HEK293T (cell line): ENCODE measurements at regions of chr18 and their contacts with region 1.

Region 1: DNA sequence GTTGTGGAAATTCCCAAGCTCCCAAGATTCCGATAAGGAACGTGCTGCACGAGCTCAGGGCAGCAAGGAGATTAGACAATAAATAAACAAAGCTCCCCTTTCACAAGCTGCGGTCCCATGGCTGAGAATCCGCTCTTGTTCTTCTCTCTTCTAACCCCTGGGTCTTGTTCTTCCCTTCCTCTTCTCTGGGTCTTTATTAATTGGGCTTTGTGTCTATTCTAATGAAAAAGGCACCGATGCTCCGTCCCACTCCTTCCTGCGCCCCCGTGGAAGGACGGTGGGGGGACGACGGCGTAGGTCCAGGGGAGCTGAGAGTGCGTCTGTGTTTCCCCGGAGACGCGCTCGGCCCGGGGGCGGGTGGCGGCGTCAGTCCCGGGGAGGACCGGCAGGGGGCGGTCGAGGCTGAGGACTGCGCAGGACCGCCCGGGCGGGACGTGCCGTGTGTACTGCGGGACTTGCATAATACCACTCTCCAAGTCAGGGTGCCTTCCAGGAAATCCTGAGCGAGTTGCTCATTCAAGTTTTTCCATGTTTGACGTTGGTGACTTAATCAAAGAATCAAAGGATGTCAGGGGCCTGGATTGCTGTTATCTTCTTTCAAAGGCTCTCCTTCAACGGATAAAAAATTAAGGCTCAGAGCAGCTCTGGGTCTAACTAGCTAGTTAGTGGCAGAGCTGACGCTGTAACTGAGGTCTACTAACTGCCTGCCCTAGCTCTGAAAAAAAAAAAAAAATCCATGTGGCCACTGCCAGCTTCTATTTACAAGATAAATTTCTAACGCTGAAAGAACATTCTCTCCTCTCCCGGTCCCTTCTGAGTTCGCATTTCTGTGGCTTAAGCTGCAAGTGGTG is 321.4 kb downstream of the TGIF1 start:
- DNase-seq: peak; percentile 76

Region 2: DNA sequence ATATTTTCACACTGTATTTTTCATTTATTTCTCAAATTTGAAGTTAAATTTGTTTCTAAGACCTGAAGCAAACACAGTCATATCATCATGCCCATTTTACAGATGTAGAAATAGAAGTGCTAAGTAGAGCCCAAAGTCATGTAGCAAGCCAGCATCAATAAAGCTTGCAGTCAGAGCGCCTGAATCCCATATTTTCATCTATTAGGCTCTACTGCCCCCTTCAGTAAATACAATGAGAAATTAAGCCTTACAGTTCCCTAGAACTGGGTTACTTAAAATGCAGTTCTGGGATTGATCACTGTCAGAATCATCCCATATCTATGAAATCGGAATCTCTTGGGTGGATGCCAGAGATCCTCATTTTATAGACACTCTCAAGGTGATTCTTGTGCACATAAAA is 98.5 kb after region 1 on chr18:
- CTCF ChIA-PET with region 1: interaction called, 26 read pairs
- POLR2A ChIA-PET with region 1: interaction called, 3 read pairs
- DNase-seq: peak; percentile 15

Region 3: GRCh38 chr18:3995476-3996102 is 224.2 kb after region 1 on chr18:
- CTCF ChIA-PET with region 1: interaction called, 14 read pairs
- POLR2A ChIA-PET with region 1: no interaction called
- DNase-seq: peak; percentile 14